Body of pancreas (tissue), 4 donors: ENCODE measurements at regions of chr5 and their contacts with region 1.

Region 1: GRCh38 chr5:138594305-138595058 is 19.3 kb upstream of the HSPA9 start:
- DNase-seq: no peak
- ATAC-seq: no peak
- H3K4me3 ChIP-seq: no peak overlapping the region
- H3K27ac ChIP-seq: no peak overlapping the region
- H3K4me1 ChIP-seq: no peaks in the 10 kb centered on the region
- H3K27me3 ChIP-seq: no peaks in the 10 kb centered on the region
- CTCF ChIP-seq: peak in 4 of 7 experiments; percentile 13 to 23 (median 18)
- POLR2A ChIP-seq: no peak

Region 2: GRCh38 chr5:139262742-139263445 is 668.4 kb after region 1 on chr5:
- intact Hi-C with region 1: loop called (anchors 10 kb)
- DNase-seq: peak; percentile 84 to 90 (median 90)
- ATAC-seq: peak; percentile 98
- H3K4me3 ChIP-seq: no peak overlapping the region
- H3K27ac ChIP-seq: no peak overlapping the region
- H3K4me1 ChIP-seq: peaks cover 6% of the 10 kb centered on the region
- H3K27me3 ChIP-seq: no peaks in the 10 kb centered on the region
- CTCF ChIP-seq: peak; percentile 67 to 95 (median 90)
- POLR2A ChIP-seq: no peak